Left cardiac atrium (tissue), 4 donors: ENCODE measurements at regions of chr3 and their contacts with region 1.

Region 1: DNA sequence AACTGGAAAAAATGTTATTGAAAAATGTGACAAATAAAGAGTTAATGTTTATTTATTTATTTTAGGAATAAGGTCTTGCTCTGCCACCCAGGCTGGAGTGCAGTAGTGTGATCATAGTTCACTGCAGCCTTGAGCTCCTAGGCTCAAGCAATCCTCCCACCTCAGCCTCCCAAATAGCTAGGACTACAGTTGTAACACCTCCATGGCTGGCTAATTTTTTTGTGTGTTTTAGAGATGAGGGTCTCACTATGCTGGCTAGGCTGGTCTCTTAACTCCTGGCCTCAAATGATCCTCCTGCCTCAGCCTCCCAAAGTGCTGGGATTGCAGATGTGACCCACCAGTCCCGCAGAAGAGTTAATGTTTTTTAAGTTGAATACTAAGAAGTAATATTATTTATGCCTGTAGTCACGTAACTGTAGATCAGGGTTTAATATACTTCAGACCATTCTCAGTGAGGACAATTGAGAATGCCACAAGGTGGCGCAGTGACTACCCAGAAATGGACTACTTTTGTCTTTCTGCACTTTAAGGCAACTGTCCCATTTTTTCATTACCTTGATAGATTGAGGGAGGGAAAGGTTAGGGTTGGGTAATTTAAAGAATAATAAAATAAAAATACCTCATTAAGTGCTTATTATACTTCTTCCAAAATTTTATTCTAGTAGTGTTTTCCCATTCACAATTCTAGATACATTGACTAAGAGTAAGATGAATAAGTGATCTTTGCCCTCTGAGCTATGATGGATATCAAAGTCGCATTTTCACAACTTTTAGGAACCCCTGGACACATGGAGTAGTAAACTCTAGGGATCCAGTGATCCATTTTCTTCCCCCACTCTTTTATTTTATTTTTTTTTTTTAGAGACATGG is 6.0 kb downstream of the MUC13 start:
- DNase-seq: peak; percentile 77
- ATAC-seq: peak; percentile 70 to 73

Region 2: GRCh38 chr3:124862006-124862405 is 66.6 kb before region 1 on chr3:
- intact Hi-C with region 1: no loop called
- DNase-seq: no peak
- ATAC-seq: no peak

Region 3: GRCh38 chr3:125165189-125165947 is 236.8 kb after region 1 on chr3:
- intact Hi-C with region 1: loop called in 1 of 2 experiments (anchors 5 kb)
- DNase-seq: peak; percentile 75
- ATAC-seq: peak; percentile 84 to 88

Region 4: GRCh38 chr3:125437631-125438435 is 509.3 kb after region 1 on chr3:
- intact Hi-C with region 1: loop called in 1 of 2 experiments (anchors 5 kb)
- DNase-seq: peak; percentile 55
- ATAC-seq: peak; percentile 57 to 70